Endothelial cell of umbilical vein (primary cell): ENCODE measurements at regions of chr6 and their contacts with region 1.

Region 1: GRCh38 chr6:31958741-31959739 is at the starts of genes NELFE and SKIC2:
- DNase-seq: peak; percentile 98
- H3K4me3 ChIP-seq: peak within 1 kb of the TSS; percentile 66 to 84 (median 70)
- H3K27ac ChIP-seq: peak within 1 kb of the TSS; percentile 75
- H3K4me1 ChIP-seq: peaks cover 17% of the 10 kb centered on the region
- H3K27me3 ChIP-seq: no peaks in the 10 kb centered on the region
- CTCF ChIP-seq: no peak
- POLR2A ChIP-seq: peak; percentile 93
- total RNA-seq, gene NELFE: 68.5 and 71.3 TPM in 2 replicates
- total RNA-seq, gene SKIC2: 67.8 and 76.7 TPM in 2 replicates

Region 2: DNA sequence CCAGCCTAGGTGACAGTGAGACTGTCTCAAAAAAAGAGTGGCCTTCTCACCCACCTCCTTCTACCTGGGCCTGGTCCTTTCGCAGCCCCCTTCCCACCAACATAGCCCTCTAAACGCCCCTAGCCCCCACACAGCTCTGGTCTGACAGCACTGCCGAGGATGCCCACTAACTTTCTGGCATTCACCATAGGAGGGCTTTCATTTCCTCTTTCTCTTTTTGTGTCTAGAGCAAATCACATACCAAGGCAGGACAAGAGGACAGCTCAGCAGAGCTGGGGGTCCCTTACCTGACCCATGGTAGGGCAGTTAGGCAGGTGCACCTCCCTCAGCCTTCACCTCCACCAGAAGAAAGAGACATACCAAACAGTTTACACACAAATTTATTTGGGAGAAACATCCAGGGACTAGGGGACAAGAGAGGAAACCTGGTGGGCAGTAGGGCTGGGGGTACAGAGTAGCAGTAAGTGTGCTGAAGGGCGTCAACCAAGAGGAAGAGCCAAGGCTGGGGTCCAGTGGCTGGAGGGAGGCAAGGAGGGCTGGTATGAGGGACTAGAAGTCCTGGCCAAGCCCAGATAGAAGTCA is 282.6 kb before region 1 on chr6:
- CTCF ChIA-PET with region 1: no interaction called
- POLR2A ChIA-PET with region 1: no interaction called
- dilution Hi-C with region 1: no loop called
- intact Hi-C with region 1: no loop called
- DNase-seq: no peak
- H3K4me3 ChIP-seq: no peak overlapping the region
- H3K27ac ChIP-seq: no peak overlapping the region
- H3K4me1 ChIP-seq: peaks cover 5% of the 10 kb centered on the region
- H3K27me3 ChIP-seq: no peaks in the 10 kb centered on the region
- CTCF ChIP-seq: no peak
- POLR2A ChIP-seq: no peak

Region 3: GRCh38 chr6:31776989-31777666 is 181.9 kb before region 1 on chr6 and contains the start of gene VWA7:
- CTCF ChIA-PET with region 1: no interaction called
- POLR2A ChIA-PET with region 1: no interaction called
- dilution Hi-C with region 1: no loop called
- intact Hi-C with region 1: loop called (anchors 2 kb)
- DNase-seq: peak; percentile 35
- H3K4me3 ChIP-seq: no peak within 1 kb of the TSS
- H3K27ac ChIP-seq: no peak within 1 kb of the TSS
- H3K4me1 ChIP-seq: peaks cover 4% of the 10 kb centered on the region
- H3K27me3 ChIP-seq: no peaks in the 10 kb centered on the region
- CTCF ChIP-seq: no peak
- POLR2A ChIP-seq: no peak
- total RNA-seq, gene VWA7: 0.25 and 0.51 TPM in 2 replicates

Region 4: GRCh38 chr6:31971993-31972708 is 13.1 kb after region 1 on chr6 and contains the start of gene DXO:
- CTCF ChIA-PET with region 1: no interaction called
- POLR2A ChIA-PET with region 1: no interaction called
- dilution Hi-C with region 1: no loop called
- intact Hi-C with region 1: loop called (anchors 1 kb)
- DNase-seq: peak; percentile 98
- H3K4me3 ChIP-seq: peak within 1 kb of the TSS; percentile 51 to 73 (median 63)
- H3K27ac ChIP-seq: peak within 1 kb of the TSS; percentile 79
- H3K4me1 ChIP-seq: peaks cover 17% of the 10 kb centered on the region
- H3K27me3 ChIP-seq: no peaks in the 10 kb centered on the region
- CTCF ChIP-seq: no peak
- POLR2A ChIP-seq: no peak
- total RNA-seq, gene DXO: 18.0 and 20.7 TPM in 2 replicates